ENCODE measurements at regions of chr17 and their contacts with region 1.

Region 1: GRCh38 chr17:1573916-1574696 is 11.5 kb upstream of the PITPNA start:
- DNase-seq: peak; percentile 92
- ATAC-seq: peak; percentile 57 to 71

Region 2: GRCh38 chr17:1628856-1629646 is 54.9 kb after region 1 on chr17:
- intact Hi-C with region 1: loop called (anchors 2 kb)
- DNase-seq: peak; percentile 94
- ATAC-seq: peak; percentile 89 to 91

Region 3: DNA sequence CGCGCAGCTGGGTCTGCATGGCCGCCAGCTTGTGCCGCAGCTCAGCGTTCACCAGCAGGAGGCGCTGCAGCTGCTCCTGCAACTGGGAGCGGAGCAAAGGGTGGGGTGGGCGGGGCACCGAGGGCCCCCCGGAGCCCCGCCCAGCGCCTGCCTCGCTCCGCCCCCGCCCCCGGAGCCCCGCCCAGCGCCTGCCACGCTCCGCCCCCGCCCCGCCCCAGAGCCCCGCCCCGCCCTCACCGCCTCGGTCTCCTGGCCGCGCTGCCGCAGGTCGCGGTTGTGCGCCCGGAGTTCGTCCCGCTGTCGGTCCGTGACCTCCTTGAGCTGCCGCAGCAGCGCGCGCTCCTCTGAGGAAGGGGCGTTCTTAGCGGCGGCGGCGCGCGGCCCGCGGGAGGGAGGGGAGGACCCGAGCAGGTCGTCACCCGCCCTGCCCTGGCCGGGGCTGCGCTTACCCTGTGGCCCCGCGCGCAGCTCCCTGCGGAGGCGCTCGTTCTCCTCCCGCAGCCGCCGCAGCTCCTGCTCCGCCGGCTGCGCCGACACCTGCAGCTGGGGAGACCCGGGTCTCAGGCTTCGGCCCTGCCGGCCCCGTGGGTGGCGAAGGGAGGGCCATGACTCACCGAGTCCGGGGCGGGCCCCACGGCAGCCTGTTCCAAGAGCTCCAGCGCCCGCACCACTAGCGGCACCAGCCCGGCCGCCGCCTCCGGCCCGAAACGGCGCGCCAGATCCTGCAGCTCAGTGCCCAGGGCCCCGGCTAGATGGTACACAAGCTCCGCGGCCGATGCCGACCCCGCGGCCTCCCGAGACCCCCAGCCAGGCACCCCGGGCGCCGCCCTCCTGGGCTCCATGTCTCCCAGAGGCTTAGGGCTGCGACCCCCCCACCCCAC is 75.1 kb after region 1 on chr17:
- intact Hi-C with region 1: loop called in 1 of 2 experiments (anchors 5 kb)
- DNase-seq: peak; percentile 93
- ATAC-seq: peak; percentile 76 to 83